Posterior cingulate gyrus (tissue), 11 donors: ENCODE measurements at regions of chr10 and their contacts with region 1.

Region 1: DNA sequence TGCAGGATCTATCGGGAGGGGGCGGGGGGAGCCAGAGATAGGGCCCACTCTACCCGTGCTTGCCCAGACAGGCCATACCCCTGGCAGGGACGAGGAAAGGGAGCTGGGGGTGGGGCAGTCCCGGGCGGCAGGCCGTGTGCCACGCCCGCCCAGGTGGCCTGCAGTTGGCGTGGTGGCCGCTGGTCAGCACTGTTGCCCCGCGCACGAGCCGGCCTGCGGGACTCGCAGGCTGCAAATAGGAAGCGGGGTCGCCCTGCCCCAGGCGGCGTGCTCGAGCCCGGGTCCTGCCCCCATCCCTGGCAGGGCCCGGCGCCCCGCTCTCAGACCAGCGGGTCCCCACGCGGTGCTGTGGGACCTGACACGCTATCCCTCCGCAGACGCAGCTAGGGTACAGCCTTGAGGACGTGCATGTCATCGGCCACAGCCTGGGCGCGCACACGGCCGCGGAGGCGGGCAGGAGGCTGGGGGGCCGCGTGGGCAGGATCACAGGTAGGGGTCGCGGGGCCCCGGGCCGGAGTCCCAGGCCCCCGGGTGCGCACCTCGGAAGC is 6.7 kb downstream of the PNLIPRP2 start:
- DNase-seq: peak in 4 of 10 donors; percentile 24 to 88 (median 62)

Region 2: GRCh38 chr10:116470768-116471415 is 156.6 kb before region 1 on chr10:
- intact Hi-C with region 1: no loop called
- DNase-seq: no peak

Region 3: DNA sequence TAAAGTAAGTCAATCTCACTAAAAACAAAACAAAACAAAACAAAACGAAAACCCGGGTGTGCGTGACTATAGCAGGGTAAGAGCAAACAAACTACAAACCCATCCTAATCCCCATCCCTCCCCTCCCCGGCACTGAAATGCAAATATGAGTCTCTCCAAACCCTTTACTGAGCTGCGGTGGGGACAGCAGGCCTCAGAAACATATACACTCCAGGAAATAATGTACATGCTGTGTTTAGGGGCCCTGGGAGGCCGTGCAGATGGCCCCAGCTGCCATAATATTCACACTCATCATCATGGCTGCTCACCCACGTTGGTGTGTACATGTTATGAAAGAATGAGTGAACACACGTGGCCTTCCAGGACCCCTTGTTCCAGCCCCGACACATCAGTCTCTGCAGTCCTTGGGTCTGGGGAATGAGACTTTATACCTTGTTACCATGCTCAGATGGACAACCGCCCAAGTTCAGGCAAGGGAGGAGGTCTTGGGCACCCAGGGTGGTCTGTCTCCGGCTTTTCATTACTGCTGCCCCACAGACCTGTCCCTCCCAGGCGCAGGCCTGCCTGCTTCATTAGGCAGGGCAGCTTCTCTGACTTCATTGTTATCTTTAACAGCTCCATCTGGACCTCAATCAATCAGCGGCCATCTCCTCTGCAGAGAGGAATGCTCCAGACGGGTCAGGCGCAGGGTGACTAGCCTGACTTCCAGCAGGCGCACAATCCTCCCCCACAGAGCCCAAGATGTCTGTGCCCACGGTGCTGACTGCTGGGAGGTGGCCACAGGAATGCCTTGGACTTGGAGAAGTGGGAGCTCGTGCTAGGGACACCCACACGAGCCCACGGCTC is 94.3 kb after region 1 on chr10:
- intact Hi-C with region 1: no loop called
- DNase-seq: no peak

Region 4: DNA sequence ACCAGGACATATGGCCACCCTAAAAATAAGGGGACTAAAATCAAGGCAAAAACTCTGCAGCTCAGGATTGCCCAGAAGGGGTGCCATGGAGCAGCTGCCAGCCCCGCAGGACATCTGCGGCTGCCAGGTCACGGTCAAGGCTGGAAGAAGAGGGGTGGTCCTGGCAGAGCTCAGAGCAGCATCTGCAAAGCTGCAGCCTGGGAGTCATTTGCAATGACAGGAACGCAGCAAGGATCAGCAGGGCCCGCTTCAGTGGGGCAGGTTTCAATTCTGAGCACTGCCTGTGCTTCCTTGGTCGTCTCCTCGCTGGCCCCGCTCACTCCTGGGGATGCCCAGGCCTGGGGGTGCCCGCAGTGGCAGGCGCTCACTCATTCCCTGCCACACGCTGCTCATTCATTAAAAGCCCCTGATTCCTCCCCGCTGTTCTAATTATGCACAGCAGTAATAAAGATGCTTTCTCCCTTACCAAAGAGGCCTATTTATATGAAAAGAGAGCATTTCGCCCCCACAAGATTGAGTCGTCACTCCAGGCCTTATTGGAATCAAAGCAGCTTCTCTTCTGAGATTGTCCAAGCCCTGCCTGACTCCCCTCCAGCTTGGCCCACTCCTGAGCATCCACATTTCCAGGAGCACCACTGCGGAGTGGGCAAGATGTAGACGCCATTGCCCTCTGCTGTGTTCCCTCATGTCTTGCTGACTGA is 110.3 kb after region 1 on chr10:
- intact Hi-C with region 1: no loop called
- DNase-seq: peak in 9 of 10 donors; percentile 30 to 90 (median 46)

Region 5: DNA sequence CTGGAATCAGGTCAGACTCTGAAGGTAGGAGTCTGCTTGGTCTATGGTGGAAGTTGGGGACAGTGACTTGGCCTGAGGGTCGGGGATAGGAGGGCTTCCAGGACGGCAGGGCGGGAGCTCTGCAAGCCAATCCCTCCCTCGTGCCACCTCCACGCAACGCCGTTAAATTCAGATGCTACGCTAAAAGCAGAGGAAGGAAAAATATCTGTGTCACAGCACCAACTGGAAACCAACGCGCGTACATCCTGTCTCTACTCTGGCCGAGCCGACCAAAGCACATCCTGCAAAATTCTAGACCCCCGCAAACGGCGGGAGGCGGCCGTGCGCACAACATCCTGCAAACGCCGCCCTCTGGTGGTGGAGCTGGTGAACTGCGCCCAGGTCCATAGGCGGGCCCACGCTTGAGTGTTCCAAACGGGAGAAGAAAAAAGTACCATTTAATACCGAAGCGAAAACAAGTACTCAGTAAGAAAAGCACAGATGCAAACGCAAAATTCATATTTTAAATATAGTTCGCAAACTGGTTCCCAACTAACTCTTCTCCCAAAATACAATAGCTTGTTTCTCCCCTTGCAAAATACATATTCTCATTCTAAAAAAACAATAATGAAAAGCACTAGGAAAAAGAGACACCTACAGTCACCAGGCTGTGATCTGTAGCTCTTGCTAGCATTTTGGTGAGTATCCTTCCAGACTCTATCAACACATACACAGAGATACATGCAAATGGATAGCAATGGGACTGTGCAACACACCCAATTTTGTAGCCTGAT is 160.6 kb after region 1 on chr10:
- intact Hi-C with region 1: loop called (anchors 5 kb)
- DNase-seq: peak; percentile 78 to 98 (median 86)